ENCODE measurements at regions of chr6 and their contacts with region 1.

Region 1: DNA sequence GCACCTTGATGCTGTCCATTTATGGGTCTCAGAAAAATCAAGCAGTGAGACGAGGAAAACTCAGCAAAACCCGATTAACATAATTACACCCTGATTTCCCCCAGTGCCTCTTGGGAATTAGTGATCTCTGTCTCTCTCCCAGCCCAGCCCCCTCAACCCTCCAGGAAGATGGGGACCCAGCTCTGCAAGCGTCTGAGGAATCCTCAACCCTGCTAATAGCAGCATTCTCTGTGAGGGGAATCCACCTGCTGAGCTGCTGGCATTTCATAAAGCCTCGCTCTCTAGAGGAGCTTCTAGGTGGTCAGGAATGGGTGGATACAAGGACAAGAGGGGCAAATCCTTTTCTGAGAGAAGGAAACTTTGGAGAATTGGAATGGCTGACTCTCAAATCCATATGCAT is 13.9 kb downstream of the NR2E1 start:
- DNase-seq: no peak
- H3K4me3 Mint-ChIP-seq: no peak overlapping the region
- H3K27ac Mint-ChIP-seq: no peak overlapping the region
- H3K4me1 Mint-ChIP-seq: peaks cover 5% of the 10 kb centered on the region
- H3K27me3 Mint-ChIP-seq: peaks cover 68% of the 10 kb centered on the region

Region 2: GRCh38 chr6:108168501-108169463 is 11.0 kb before region 1 on chr6:
- intact Hi-C with region 1: loop called (anchors 2 kb)
- DNase-seq: no peak
- H3K4me3 Mint-ChIP-seq: no peak overlapping the region
- H3K27ac Mint-ChIP-seq: peak overlapping the region; percentile 40
- H3K4me1 Mint-ChIP-seq: peaks cover 14% of the 10 kb centered on the region
- H3K27me3 Mint-ChIP-seq: peaks cover 85% of the 10 kb centered on the region

Region 3: GRCh38 chr6:108211644-108212043 is 31.9 kb after region 1 on chr6:
- intact Hi-C with region 1: no loop called
- DNase-seq: no peak
- H3K4me3 Mint-ChIP-seq: no peak overlapping the region
- H3K27ac Mint-ChIP-seq: no peak overlapping the region
- H3K4me1 Mint-ChIP-seq: no peaks in the 10 kb centered on the region
- H3K27me3 Mint-ChIP-seq: no peaks in the 10 kb centered on the region

Region 4: GRCh38 chr6:108438918-108439317 is 259.2 kb after region 1 on chr6:
- intact Hi-C with region 1: no loop called
- DNase-seq: no peak
- H3K4me3 Mint-ChIP-seq: no peak overlapping the region
- H3K27ac Mint-ChIP-seq: no peak overlapping the region
- H3K4me1 Mint-ChIP-seq: no peaks in the 10 kb centered on the region
- H3K27me3 Mint-ChIP-seq: peaks cover 49% of the 10 kb centered on the region